Activated CD4-positive, alpha-beta memory T cell treated with anti-CD3 and anti-CD28 coated beads, Interleukin-2, amount 10 ng/mL, durations not matched to agents 7 days and 5 days (primary cell): ENCODE measurements at regions of chr21 and their contacts with region 1.

Region 1: GRCh38 chr21:41283211-41283818 is 33.3 kb upstream of the FAM3B start:
- DNase-seq: peak; percentile 47
- H3K4me3 Mint-ChIP-seq: no peak overlapping the region
- H3K27ac Mint-ChIP-seq: no peak overlapping the region
- H3K4me1 Mint-ChIP-seq: no peaks in the 10 kb centered on the region
- H3K27me3 Mint-ChIP-seq: peaks cover 23% of the 10 kb centered on the region

Region 2: GRCh38 chr21:41369105-41369919 is 86.0 kb after region 1 on chr21:
- CTCF ChIA-PET with region 1: interaction called, 12 read pairs
- POLR2A ChIA-PET with region 1: no interaction called
- DNase-seq: peak; percentile 29
- H3K4me3 Mint-ChIP-seq: peak overlapping the region; percentile 70
- H3K27ac Mint-ChIP-seq: peak overlapping the region; percentile 77
- H3K4me1 Mint-ChIP-seq: peaks cover 72% of the 10 kb centered on the region
- H3K27me3 Mint-ChIP-seq: no peaks in the 10 kb centered on the region

Region 3: GRCh38 chr21:41460578-41461527 is 177.5 kb after region 1 on chr21:
- CTCF ChIA-PET with region 1: interaction called, 11 read pairs
- POLR2A ChIA-PET with region 1: no interaction called
- DNase-seq: peak; percentile 51
- H3K4me3 Mint-ChIP-seq: no peak overlapping the region
- H3K27ac Mint-ChIP-seq: no peak overlapping the region
- H3K4me1 Mint-ChIP-seq: peaks cover 2% of the 10 kb centered on the region
- H3K27me3 Mint-ChIP-seq: no peaks in the 10 kb centered on the region

Region 4: GRCh38 chr21:41580758-41581554 is 297.6 kb after region 1 on chr21:
- CTCF ChIA-PET with region 1: no interaction called
- POLR2A ChIA-PET with region 1: no interaction called
- DNase-seq: no peak
- H3K4me3 Mint-ChIP-seq: no peak overlapping the region
- H3K27ac Mint-ChIP-seq: no peak overlapping the region
- H3K4me1 Mint-ChIP-seq: no peaks in the 10 kb centered on the region
- H3K27me3 Mint-ChIP-seq: peaks cover 5% of the 10 kb centered on the region

Region 5: DNA sequence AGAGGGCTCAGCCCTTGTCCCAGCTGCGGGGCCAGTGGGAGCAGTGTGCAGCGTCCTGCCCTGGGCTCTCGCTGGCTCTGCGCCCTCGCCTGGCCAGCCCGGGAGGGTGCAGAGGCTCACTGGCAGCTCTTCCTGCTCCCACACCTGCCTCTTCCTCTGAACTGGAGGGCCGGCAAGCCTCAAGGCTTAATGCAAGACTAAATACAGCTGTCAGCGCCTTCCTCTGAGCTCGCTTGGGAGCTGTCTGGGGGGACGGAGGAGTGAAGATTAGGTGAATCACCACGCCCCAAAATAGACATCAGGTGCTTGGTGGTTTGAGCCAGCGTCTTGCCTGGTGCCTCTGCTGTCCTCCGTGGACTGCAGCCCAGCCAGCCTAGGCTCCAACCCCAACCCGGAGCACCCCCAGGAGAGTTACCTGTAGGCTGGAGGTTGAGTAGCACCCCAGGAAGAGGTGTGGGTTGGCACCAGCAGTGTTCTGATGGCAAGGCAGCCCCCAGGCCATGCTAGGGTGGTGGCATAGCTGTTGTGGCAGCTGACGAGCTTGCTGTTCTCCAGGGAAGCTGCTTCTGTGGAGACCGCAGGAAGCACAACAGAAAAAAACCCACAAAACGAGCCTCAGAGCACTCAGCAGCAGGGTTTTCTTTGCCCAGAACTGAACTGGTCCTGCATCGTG is 824.7 kb after region 1 on chr21:
- CTCF ChIA-PET with region 1: interaction called, 11 read pairs
- POLR2A ChIA-PET with region 1: no interaction called
- DNase-seq: peak; percentile 72
- H3K4me3 Mint-ChIP-seq: no peak overlapping the region
- H3K27ac Mint-ChIP-seq: no peak overlapping the region
- H3K4me1 Mint-ChIP-seq: peaks cover 7% of the 10 kb centered on the region
- H3K27me3 Mint-ChIP-seq: peaks cover 2% of the 10 kb centered on the region

Region 6: GRCh38 chr21:42117229-42117966 is 834.1 kb after region 1 on chr21:
- CTCF ChIA-PET with region 1: interaction called, 11 read pairs
- POLR2A ChIA-PET with region 1: no interaction called
- DNase-seq: peak; percentile 72
- H3K4me3 Mint-ChIP-seq: no peak overlapping the region
- H3K27ac Mint-ChIP-seq: no peak overlapping the region
- H3K4me1 Mint-ChIP-seq: peaks cover 27% of the 10 kb centered on the region
- H3K27me3 Mint-ChIP-seq: peaks cover 65% of the 10 kb centered on the region